OCI-LY7 (cell line): ENCODE measurements at regions of chr1 and their contacts with region 1.

Region 1: DNA sequence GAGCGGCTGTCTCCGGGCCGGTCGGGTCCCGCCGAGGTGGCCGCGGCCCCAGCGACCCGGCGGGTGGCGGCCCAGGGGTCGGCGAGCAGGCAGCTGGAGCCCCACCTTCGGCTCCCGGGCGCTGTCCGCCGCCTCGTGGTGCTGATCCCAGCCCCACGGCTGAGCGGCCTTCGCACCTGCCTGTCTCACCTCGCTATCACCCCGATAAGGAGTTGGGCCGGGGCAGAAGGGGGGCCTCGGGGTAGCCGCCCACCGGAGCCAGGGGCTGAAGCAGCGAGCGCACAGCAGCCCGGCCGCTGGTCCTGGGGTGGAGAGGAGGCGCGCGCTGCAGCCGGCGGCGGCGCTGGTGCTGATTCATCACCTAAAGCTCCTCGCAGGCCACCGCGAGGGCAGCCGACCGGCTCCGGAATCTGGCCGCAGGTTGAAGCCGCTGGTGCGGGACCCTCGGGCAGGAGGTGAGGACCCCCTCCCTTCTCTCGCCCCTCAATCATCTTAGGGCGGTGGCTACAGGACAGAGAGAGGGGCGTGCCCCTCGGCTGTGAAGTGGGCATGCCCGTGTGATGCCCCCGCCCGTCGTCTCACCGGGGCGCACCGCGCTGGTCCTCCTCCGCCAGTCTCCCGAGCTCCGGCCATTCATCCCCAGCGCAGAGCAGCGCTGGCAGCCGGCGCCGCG is 575 bp downstream of the TRIM67 start:
- DNase-seq: no peak
- H3K4me3 ChIP-seq: no peak overlapping the region
- H3K27ac ChIP-seq: no peak overlapping the region
- H3K4me1 ChIP-seq: no peaks in the 10 kb centered on the region
- CTCF ChIP-seq: no peak

Region 2: DNA sequence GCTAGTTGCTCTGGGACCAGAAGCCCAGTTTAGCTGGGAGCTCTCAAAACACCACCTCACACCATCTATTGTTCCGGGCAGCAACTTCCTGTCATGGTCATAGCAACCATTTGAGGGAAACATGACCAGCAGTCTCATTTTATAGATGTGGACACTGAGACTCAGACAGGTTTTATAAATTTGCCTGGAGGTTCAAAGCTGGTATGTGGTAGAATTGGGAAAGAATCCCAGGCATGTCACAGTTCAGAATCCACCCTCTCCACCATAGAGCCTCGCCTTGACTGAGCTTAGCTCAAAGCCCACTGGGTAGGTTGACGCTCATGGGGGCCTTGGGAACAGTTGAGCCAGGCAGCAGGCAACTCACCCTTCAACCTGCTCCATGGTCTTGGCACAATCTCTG is 14.5 kb before region 1 on chr1:
- CTCF ChIA-PET with region 1: no interaction called
- POLR2A ChIA-PET with region 1: no interaction called
- intact Hi-C with region 1: loop called (anchors 1 kb)
- DNase-seq: no peak
- H3K4me3 ChIP-seq: no peak overlapping the region
- H3K27ac ChIP-seq: no peak overlapping the region
- H3K4me1 ChIP-seq: no peaks in the 10 kb centered on the region
- CTCF ChIP-seq: no peak